HCT116 (cell line): ENCODE measurements at regions of chr2 and their contacts with region 1.

Region 1: GRCh38 chr2:140905083-140905781 is 1225.6 kb downstream of the LRP1B start:
- DNase-seq: no peak
- ATAC-seq: no peak
- H3K4me3 ChIP-seq: no peak overlapping the region
- H3K27ac ChIP-seq: no peak overlapping the region
- H3K4me1 ChIP-seq: no peaks in the 10 kb centered on the region
- H3K27me3 ChIP-seq: no peaks in the 10 kb centered on the region
- CTCF ChIP-seq: no peak
- POLR2A ChIP-seq: no peak
- RAD21 ChIP-seq: no peak

Region 2: DNA sequence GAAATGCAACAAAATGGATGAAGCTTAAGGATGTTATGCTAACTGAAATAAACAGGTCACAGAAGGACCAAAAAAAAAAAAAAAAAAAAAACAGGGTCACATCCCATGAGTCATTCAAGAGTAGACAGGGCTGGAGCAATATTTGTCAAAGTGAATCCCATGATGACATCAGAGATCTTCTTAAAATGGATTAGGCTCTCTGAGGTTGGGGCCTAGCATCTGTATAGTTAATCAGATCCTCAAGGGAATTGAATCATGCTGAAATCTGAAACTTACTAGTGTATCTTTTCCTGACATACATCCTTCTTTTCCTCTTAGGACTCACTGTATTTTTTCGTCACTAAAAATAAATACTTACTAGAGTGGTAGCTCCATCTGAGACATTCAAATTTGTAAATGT is 1744.4 kb before region 1 on chr2:
- CTCF ChIA-PET with region 1: no interaction called
- POLR2A ChIA-PET with region 1: no interaction called
- RAD21 ChIA-PET with region 1: no interaction called
- intact Hi-C with region 1: no loop called
- DNase-seq: no peak
- ATAC-seq: no peak
- H3K4me3 ChIP-seq: no peak overlapping the region
- H3K27ac ChIP-seq: no peak overlapping the region
- H3K4me1 ChIP-seq: no peaks in the 10 kb centered on the region
- H3K27me3 ChIP-seq: no peaks in the 10 kb centered on the region
- CTCF ChIP-seq: no peak
- POLR2A ChIP-seq: no peak
- RAD21 ChIP-seq: no peak

Region 3: DNA sequence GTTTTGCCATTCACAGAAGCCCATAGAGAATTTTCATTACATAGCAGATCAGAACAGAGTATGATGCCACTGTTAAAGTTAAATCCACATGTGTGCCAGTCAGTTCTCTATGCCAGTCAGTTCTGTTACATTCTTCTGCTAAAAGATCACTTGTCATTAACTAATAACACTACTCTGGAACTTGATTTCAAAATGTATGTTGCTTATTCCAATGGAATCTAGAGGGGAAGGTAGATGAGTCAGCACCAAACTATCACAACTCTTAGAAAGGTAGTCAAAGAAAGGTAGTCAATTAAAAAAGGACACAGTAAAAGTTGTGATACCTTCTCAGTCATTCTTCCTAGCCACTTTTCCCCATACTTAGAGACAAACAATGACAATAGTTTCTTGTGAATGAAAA is 11.2 kb after region 1 on chr2:
- CTCF ChIA-PET with region 1: no interaction called
- POLR2A ChIA-PET with region 1: no interaction called
- RAD21 ChIA-PET with region 1: no interaction called
- intact Hi-C with region 1: loop called (anchors 1 kb)
- DNase-seq: no peak
- ATAC-seq: no peak
- H3K4me3 ChIP-seq: no peak overlapping the region
- H3K27ac ChIP-seq: no peak overlapping the region
- H3K4me1 ChIP-seq: no peaks in the 10 kb centered on the region
- H3K27me3 ChIP-seq: no peaks in the 10 kb centered on the region
- CTCF ChIP-seq: no peak
- POLR2A ChIP-seq: no peak
- RAD21 ChIP-seq: no peak